AG04449 (cell line): ENCODE measurements at regions of chr7 and their contacts with region 1.

Region 1: DNA sequence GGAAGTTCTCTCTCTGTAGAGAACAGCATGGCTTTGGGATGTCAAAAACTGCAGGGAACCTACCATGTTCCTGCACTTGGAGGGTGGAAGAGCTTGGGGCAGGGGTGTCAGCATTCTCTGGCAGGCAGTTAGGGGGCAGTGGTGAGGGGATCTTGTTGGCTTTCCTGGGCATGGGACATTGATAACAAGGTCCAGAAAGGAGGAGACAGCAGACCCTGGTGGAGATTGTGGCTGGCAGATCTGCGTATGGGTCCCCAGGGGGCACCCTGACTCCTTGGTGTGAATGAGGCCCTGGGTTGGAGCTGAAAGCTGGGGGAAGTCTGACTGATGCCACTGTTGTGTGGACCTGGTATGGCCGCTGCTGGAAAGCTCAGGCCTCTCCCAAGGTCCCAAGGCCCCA is 22.9 kb upstream of the CAMK2B start:
- DNase-seq: no peak
- H3K4me3 ChIP-seq: no peak overlapping the region
- CTCF ChIP-seq: peak; percentile 65

Region 2: GRCh38 chr7:43856996-43857395 is 491.3 kb before region 1 on chr7:
- CTCF ChIA-PET with region 1: no interaction called
- POLR2A ChIA-PET with region 1: no interaction called
- DNase-seq: no peak
- H3K4me3 ChIP-seq: no peak overlapping the region
- CTCF ChIP-seq: no peak

Region 3: GRCh38 chr7:44366986-44367385 is 18.7 kb after region 1 on chr7:
- CTCF ChIA-PET with region 1: interaction called, 16 read pairs
- POLR2A ChIA-PET with region 1: no interaction called
- DNase-seq: no peak
- H3K4me3 ChIP-seq: no peak overlapping the region
- CTCF ChIP-seq: no peak

Region 4: GRCh38 chr7:44466300-44467216 is 118.3 kb after region 1 on chr7:
- CTCF ChIA-PET with region 1: interaction called, 11 read pairs
- POLR2A ChIA-PET with region 1: no interaction called
- DNase-seq: peak; percentile 47
- H3K4me3 ChIP-seq: no peak overlapping the region
- CTCF ChIP-seq: no peak

Region 5: DNA sequence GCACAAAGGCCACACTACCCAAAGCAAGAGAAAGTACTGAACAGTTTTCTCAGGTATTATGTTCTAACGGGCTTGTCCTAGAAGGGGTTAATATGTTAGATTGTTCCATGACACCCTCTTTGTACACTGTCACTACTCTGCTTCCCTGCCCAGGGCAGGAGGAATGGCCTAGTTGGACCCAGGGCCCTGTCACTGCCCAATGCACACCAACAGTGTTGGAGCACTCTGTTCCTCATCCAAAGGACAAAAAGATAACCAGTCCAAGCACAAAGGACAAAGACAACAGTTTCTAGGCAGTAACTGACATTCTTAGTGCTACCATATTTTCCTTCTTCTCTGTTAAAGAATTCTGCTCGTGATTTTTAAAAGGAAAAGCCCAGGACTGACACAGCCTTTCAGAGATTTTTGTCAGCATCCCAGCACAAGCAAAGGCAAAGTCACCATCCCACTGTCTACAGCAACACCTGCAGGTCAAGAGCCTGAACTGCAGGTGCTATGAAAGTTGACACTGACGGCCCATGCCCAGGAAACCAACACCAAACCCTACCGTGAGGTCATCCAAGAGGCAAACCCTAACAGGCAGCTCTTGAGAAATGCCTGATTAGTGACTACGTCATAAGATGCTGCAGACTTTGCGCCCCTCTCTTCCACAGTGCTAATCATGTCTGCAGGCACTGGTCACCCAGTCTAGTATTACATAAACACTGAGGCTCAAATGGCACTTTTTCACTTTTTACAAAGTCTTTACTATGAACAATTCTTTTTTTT is 128.9 kb after region 1 on chr7:
- CTCF ChIA-PET with region 1: interaction called, 13 read pairs
- POLR2A ChIA-PET with region 1: no interaction called
- DNase-seq: no peak
- H3K4me3 ChIP-seq: no peak overlapping the region
- CTCF ChIP-seq: peak; percentile 92

Region 6: GRCh38 chr7:44490351-44491200 is 142.3 kb after region 1 on chr7 and contains the start of gene NUDCD3:
- CTCF ChIA-PET with region 1: interaction called, 11 read pairs
- POLR2A ChIA-PET with region 1: no interaction called
- DNase-seq: no peak
- H3K4me3 ChIP-seq: peak within 1 kb of the TSS; percentile 97
- CTCF ChIP-seq: no peak